Ovary (tissue), 10 donors: ENCODE measurements at regions of chr20 and their contacts with region 1.

Region 1: DNA sequence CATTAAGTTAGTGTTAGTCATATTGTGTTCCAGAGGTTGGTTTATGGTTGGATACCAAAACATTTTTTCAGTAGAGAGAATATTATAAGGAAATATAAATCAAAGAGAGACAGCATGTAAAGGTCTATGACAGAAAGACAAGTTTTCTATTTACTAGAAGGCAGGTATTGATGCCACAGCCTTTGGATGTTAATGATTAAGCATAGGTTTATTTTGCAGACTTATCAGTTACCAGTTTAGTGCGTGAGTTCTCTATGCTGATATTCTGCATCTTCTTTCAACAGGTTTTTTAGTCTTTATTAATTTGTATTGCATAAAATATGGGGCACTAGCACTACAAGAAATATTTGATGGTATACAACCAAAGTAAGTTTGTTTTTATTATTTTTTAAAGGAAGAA is 45.6 kb downstream of the CSE1L start:
- DNase-seq: no peak
- H3K4me3 ChIP-seq: no peak overlapping the region
- H3K27ac ChIP-seq: no peak overlapping the region
- H3K4me1 ChIP-seq: no peaks in the 10 kb centered on the region
- H3K27me3 ChIP-seq: no peaks in the 10 kb centered on the region
- CTCF ChIP-seq: no peak
- EP300 ChIP-seq: no peak
- POLR2A ChIP-seq: no peak

Region 2: GRCh38 chr20:49151436-49151835 is 59.7 kb after region 1 on chr20:
- intact Hi-C with region 1: loop called in 1 of 4 experiments (anchors 5 kb)
- DNase-seq: no peak
- H3K4me3 ChIP-seq: no peak overlapping the region
- H3K27ac ChIP-seq: no peak overlapping the region
- H3K4me1 ChIP-seq: peaks cover 1% of the 10 kb centered on the region
- H3K27me3 ChIP-seq: no peaks in the 10 kb centered on the region
- CTCF ChIP-seq: no peak
- EP300 ChIP-seq: no peak
- POLR2A ChIP-seq: no peak